GM12878 (cell line): ENCODE measurements at regions of chr6 and their contacts with region 1.

Region 1: DNA sequence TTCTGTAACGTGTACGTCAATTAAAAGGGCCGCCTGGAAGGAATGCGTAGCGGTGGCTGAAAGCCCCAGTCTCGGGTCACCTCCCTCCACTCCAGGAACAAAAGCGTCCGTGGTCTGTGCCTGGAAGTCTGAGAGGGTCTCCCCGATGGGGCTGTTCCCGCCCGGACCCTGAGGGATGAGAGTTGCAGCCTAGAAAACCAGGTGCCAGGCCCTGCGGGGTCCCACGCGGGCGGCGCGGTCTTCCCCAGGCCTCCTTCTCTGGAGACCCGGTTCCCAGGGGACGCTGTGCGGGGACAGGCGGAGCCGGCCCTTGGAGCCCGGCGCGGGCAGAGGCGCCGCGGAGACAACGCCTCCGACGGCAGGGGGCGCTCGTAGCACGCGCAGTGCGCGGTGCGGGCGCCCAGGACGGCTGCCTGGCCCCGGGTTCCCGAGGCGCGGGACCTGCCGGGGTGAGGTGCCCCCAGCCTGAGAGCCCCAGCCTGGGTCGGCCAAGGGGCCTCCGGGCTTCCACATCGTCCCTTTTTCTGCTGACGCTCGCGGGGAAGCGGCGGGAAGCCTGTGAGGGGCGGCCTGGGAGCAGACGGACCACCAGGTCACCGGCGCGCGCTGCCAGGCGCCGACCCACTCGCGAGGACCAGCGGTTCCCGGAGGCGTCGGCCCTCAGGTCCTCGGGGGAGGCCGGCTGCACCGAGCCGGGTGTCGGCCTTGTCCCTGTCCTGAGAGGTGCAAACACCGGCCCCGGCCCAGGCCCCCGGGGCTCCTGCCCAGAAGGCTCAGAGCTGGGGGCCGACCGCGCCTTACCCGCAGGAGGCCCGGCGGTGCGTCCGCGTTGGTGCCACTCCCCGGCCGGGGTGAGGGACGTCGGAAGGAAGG is 5.3 kb upstream of the FOXC1 start:
- DNase-seq: no peak
- ATAC-seq: peak; percentile 96
- H3K4me3 ChIP-seq: peak overlapping the region; percentile 16; the same call in 1 of the 2 replicates
- H3K27ac ChIP-seq: no peak overlapping the region
- H3K4me1 ChIP-seq: peaks cover 10% of the 10 kb centered on the region
- H3K27me3 ChIP-seq: peaks cover 29 to 49% of the 10 kb centered on the region in 2 experiments
- CTCF ChIP-seq: peak; percentile 71 to 93 (median 77)
- EP300 ChIP-seq: no peak
- POLR2A ChIP-seq: no peak
- RAD21 ChIP-seq: peak; percentile 94

Region 2: GRCh38 chr6:2103644-2104523 is 499.5 kb after region 1 on chr6:
- CTCF ChIA-PET with region 1: interaction called, 25 read pairs
- POLR2A ChIA-PET with region 1: no interaction called
- RAD21 ChIA-PET with region 1: interaction called, 8 read pairs
- SMC1A ChIA-PET with region 1: interaction called, 16 read pairs
- in situ Hi-C with region 1: loop called (anchors 5 kb)
- intact Hi-C with region 1: loop called (anchors 1 kb)
- DNase-seq: peak; percentile 11
- ATAC-seq: peak; percentile 84
- H3K4me3 ChIP-seq: no peak overlapping the region
- H3K27ac ChIP-seq: no peak overlapping the region
- H3K4me1 ChIP-seq: no peaks in the 10 kb centered on the region
- H3K27me3 ChIP-seq: no peaks in the 10 kb centered on the region
- CTCF ChIP-seq: peak; percentile 43 to 76 (median 56); a peak in 5 of 6 replicates
- EP300 ChIP-seq: no peak
- POLR2A ChIP-seq: no peak
- RAD21 ChIP-seq: peak; percentile 94

Region 3: DNA sequence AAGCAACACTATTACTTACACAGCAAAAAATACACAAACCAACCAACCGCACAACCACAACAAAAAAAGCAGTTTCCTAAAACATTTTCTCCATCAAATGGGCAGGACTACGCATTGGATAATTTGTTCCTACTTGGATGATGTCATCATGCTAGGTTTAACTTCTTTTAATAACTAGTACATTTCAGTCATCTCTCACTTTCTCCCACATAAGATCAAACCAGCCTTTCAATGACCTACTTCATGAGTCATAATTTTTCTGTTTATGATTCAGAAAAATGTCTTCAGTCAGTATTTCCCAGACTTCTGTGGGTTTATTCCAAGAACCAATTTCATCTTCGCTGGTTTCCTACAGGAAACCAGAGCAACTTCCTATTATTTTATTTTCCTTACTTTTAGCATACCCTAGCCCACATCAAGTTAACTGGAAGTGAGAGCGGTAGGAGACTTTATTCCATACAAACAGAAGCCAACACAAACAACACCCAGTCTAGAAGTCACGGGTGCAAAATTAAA is 506.8 kb after region 1 on chr6:
- CTCF ChIA-PET with region 1: interaction called, 5 read pairs
- POLR2A ChIA-PET with region 1: no interaction called
- RAD21 ChIA-PET with region 1: interaction called, 3 read pairs
- SMC1A ChIA-PET with region 1: interaction called, 5 read pairs
- in situ Hi-C with region 1: loop called (anchors 5 kb)
- intact Hi-C with region 1: no loop called
- DNase-seq: peak; percentile 27
- ATAC-seq: peak; percentile 92
- H3K4me3 ChIP-seq: peak overlapping the region; percentile 38; the same call in 1 of the 2 replicates
- H3K27ac ChIP-seq: peak overlapping the region; percentile 51; the same call in 1 of the 2 replicates
- H3K4me1 ChIP-seq: peaks cover 7% of the 10 kb centered on the region; the same call in 1 of the 2 replicates
- H3K27me3 ChIP-seq: no peaks in the 10 kb centered on the region
- CTCF ChIP-seq: no peak
- EP300 ChIP-seq: peak; percentile 78 to 90
- POLR2A ChIP-seq: no peak
- RAD21 ChIP-seq: no peak

Region 4: GRCh38 chr6:2196079-2196679 is 591.8 kb after region 1 on chr6:
- CTCF ChIA-PET with region 1: interaction called, 6 read pairs
- POLR2A ChIA-PET with region 1: no interaction called
- RAD21 ChIA-PET with region 1: interaction called, 3 read pairs
- SMC1A ChIA-PET with region 1: interaction called, 3 read pairs
- in situ Hi-C with region 1: loop called (anchors 5 kb)
- intact Hi-C with region 1: loop called (anchors 1 kb)
- DNase-seq: peak; percentile 13
- ATAC-seq: peak; percentile 87
- H3K4me3 ChIP-seq: no peak overlapping the region
- H3K27ac ChIP-seq: no peak overlapping the region
- H3K4me1 ChIP-seq: no peaks in the 10 kb centered on the region
- H3K27me3 ChIP-seq: no peaks in the 10 kb centered on the region
- CTCF ChIP-seq: peak; percentile 67 to 79 (median 77)
- EP300 ChIP-seq: no peak
- POLR2A ChIP-seq: no peak
- RAD21 ChIP-seq: peak; percentile 88

Region 5: DNA sequence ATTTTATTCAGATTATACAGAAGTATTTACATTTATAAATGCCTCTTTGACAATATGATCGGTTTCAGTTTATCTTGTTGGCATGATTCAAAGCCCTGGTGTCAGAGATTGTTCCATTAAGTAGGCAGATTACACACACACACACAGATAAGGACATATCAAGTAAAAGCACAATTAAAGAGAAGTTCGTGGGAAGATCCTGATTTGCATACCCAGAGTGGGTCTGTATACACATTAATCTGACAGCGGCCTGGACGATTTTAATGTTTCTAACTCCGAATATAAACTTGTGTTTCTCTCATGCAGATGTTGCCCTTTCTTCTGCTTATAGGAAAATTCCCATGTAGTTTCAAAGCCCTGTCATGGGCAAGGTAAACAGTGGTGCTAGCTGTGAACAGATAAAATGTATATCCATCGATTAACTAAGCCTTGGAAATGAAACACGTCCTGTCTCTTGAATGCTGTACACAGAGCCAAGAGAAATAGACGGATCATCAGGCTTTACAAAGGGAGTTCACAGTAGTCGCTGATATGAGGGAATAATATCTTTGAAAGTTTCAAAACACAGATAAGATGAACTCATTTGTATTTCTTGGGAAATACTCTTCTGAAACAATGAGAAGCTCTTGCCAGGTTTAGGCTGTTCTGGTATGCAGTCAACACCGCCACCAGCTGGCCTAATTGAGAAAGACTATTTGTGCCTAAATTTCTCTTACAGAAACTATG is 749.2 kb after region 1 on chr6:
- CTCF ChIA-PET with region 1: interaction called, 6 read pairs
- POLR2A ChIA-PET with region 1: no interaction called
- RAD21 ChIA-PET with region 1: interaction called, 6 read pairs
- SMC1A ChIA-PET with region 1: interaction called, 4 read pairs
- in situ Hi-C with region 1: no loop called
- intact Hi-C with region 1: loop called (anchors 2 kb)
- DNase-seq: peak; percentile 8
- ATAC-seq: peak; percentile 73
- H3K4me3 ChIP-seq: no peak overlapping the region
- H3K27ac ChIP-seq: no peak overlapping the region
- H3K4me1 ChIP-seq: no peaks in the 10 kb centered on the region
- H3K27me3 ChIP-seq: no peaks in the 10 kb centered on the region
- CTCF ChIP-seq: peak; percentile 70 to 83 (median 78); a peak in 5 of 6 replicates
- EP300 ChIP-seq: no peak
- POLR2A ChIP-seq: no peak
- RAD21 ChIP-seq: peak; percentile 89